ENCODE measurements at regions of chr17 and their contacts with region 1.

Region 1: GRCh38 chr17:1724506-1725362 is at the start of gene WDR81:
- DNase-seq: peak; percentile 97
- ATAC-seq: peak; percentile 85
- total RNA-seq, gene WDR81: 26.1 TPM

Region 2: GRCh38 chr17:1653735-1654134 is 71.0 kb before region 1 on chr17:
- intact Hi-C with region 1: no loop called
- DNase-seq: no peak
- ATAC-seq: no peak

Region 3: DNA sequence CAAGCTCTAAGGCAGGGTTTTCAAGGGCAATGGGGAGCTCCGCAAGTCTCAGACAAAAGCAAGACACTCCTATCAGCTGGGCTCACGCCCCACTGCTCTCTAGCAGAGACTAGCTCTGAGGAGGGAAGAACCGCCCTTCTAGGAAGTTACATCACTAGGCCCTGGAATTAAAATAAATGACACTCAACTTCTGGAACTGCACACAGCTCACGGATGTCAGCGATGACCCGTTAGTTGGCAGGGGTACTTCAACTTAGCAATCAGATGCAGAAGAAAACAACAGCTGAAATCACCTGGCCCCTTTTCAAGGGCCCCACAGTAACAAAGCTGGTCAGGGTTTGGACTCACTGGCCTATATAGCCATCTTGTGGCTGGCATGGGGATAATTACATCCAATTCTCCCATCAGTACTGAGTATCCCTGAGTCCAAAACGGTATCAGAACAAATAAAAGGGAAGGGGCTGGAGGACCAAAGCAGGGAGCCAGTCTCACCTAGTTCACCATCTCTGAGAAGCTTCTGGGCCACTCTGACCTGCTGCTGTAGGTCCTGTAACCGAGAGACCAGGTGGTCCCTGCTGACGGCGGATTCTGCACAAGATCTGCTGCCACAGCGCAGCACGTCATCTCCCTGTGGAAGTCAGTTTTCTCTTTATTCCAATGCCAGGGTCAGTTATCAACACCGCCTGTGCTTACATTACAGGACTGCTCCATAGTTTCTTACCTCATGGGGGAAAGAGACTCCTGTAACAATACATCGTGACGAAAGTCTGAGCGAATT is 59.3 kb after region 1 on chr17:
- intact Hi-C with region 1: loop called (anchors 10 kb)
- DNase-seq: peak; percentile 83
- ATAC-seq: peak; percentile 85

Region 4: DNA sequence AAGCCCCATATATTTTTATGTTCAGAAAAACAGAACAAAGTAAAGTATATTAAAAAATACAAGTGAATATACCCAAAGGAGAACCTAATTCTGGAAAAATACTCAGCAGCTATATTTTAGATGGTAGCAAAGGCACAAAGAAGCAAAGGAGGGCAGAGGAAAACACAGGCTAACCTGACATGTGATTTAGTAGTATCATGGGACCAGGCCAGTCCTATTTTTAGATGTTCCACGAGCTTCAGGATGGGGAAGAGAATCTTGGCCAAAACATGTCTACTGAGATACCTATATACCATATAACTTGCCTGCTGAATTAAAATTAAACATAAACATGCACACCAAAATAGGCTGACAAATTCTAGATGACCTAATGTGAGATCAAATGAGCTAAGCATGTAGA is 72.1 kb after region 1 on chr17:
- intact Hi-C with region 1: no loop called
- DNase-seq: no peak
- ATAC-seq: peak; percentile 78

Region 5: GRCh38 chr17:1847191-1847590 is 122.5 kb after region 1 on chr17:
- intact Hi-C with region 1: no loop called
- DNase-seq: no peak
- ATAC-seq: no peak

Measured in sciatic nerve (tissue), 2 donors.